Activated T-helper 2 cell treated with anti-CD3 and anti-CD28 coated beads, Interferon-gamma antibody, Interleukin-2, Interleukin-4, amounts not matched to agents 10 μg/mL and 5 μg/mL and 100 μg/mL, durations not matched to agents 14 hours and 24 hours and 36 hours (primary cell): ENCODE measurements at regions of chr17 and their contacts with region 1.

Region 1: DNA sequence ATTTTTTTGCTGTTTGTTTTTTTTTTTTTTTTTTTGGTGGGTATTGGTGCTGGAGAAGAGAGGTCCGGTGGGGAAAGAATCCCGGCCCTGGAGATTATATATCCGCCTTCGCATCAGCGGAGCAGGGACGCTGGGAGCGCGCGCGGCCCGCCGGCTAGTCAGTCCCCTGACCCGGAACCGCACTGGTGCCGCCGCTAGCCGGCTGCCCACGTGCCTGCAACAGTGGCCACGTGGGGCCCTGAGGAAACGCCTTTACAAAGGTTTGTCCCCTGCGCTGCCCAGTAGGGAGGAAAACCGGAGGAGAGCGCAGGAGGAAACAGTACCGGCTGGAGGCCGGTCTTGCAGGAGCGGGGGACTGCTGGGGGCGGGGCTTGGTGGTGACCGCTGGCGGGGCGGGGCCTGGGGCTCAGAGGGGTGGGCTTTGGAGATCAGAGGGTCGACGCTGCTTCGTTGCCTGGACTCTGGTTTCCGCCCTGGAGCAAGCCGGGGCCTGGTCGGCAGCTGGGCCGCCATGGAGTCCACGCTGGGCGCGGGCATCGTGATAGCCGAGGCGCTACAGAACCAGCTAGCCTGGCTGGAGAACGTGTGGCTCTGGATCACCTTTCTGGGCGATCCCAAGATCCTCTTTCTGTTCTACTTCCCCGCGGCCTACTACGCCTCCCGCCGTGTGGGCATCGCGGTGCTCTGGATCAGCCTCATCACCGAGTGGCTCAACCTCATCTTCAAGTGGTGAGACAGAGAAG is at the start of gene G6PC3:
- DNase-seq: peak; percentile 77
- H3K4me3 Mint-ChIP-seq: peak within 1 kb of the TSS; percentile 92
- H3K27ac Mint-ChIP-seq: peak within 1 kb of the TSS; percentile 92
- H3K4me1 Mint-ChIP-seq: peaks cover 20% of the 10 kb centered on the region
- H3K27me3 Mint-ChIP-seq: no peaks in the 10 kb centered on the region
- total RNA-seq, gene G6PC3: 36.3 and 39.2 TPM in 2 replicates

Region 2: DNA sequence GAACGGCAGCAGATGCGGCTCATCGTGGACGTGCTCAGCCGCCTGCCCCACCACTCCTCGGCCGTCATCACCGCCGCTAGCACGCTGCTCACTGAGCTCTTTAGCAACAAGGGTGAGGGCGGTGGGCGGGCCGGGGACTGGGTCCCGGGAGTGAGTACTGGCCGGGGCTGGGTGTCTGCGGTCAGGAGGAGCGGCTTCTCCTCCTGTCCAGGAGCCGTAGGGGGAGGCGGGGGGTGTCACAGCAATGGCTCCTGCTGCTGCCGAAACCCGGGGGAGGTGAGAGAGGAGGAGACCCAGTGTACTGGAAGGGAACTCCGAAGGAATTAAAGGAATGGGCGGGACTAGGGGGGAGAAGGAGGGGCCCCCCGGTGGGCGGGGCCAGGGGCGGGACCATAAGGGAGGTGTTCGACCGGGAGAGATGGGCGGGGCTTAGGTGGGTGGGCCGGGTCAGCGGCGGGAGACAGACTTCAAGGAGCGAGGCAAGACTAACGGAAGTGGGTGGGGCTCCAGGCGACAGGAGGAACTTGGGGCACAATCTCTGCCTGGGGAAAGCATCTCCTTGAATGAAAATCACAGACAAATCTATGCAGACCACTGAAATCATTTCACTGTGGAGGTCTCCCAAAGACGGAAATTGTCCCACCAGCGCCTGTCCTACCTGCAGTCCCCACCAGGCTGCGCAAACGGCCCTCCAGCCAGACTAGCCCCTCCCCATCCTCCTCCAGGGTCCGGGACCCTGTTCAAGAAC is 63.9 kb before region 1 on chr17:
- intact Hi-C with region 1: loop called (anchors 2 kb)
- DNase-seq: peak; percentile 87
- H3K4me3 Mint-ChIP-seq: peak overlapping the region; percentile 81
- H3K27ac Mint-ChIP-seq: peak overlapping the region; percentile 33
- H3K4me1 Mint-ChIP-seq: peaks cover 13% of the 10 kb centered on the region
- H3K27me3 Mint-ChIP-seq: peaks cover 21% of the 10 kb centered on the region

Region 3: DNA sequence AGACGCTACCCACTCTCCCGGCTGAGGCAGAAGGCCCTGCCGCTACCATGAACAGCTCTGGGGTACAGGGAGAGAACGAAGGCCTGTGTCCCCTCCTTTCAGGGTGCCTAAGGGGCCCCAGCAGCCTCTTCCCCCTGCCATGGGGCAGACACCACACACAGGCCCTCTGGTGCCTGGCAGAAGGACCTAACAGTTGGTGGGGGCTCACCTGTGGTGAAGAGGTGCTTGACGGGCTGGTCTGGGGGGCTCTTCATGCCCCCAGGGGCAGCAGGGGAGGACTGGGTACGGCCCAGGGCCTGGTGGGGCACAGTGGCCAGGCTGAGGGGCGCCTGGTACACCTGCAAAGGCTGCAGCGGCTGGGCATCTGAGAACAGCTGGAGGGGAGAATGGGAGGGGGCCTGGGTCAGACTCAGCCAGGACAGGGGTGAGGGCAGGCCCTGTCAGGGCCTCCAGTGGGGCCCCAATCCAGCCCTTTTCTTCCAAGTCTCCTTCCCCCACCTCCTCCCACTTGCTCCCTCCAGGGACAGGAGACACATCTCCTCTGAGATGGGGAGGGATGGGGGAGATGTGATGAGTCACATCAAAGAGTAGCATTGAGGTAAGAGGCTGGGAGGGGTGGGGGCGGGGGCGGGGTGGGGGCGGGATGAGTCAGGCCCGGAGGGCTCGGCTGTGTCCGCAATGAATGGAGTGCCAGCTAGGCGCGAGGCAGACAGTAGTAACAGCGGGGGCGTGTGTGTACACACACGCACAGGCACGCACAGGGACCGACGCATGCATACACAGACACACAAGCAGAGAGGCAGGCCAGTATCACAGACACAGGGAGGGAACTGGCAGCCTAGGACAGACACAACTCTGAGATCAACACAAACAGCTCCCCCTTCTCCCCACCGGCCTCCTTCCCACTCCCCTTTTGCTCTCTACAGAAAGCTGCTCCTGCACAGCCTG is 16.0 kb after region 1 on chr17:
- intact Hi-C with region 1: loop called (anchors 2 kb)
- DNase-seq: peak; percentile 23
- H3K4me3 Mint-ChIP-seq: peak overlapping the region; percentile 35
- H3K27ac Mint-ChIP-seq: peak overlapping the region; percentile 69
- H3K4me1 Mint-ChIP-seq: peaks cover 13% of the 10 kb centered on the region
- H3K27me3 Mint-ChIP-seq: no peaks in the 10 kb centered on the region

Region 4: GRCh38 chr17:44123356-44124117 is 52.9 kb after region 1 on chr17 and contains the start of gene HDAC5:
- intact Hi-C with region 1: loop called (anchors 5 kb)
- DNase-seq: peak; percentile 93
- H3K4me3 Mint-ChIP-seq: peak within 1 kb of the TSS; percentile 90
- H3K27ac Mint-ChIP-seq: peak within 1 kb of the TSS; percentile 95
- H3K4me1 Mint-ChIP-seq: peaks cover 17% of the 10 kb centered on the region
- H3K27me3 Mint-ChIP-seq: peaks cover 9% of the 10 kb centered on the region
- total RNA-seq, gene HDAC5: 18.7 and 19.9 TPM in 2 replicates

Region 5: GRCh38 chr17:44141717-44142285 is 71.2 kb after region 1 on chr17 and contains the start of gene HROB:
- intact Hi-C with region 1: loop called (anchors 5 kb)
- DNase-seq: peak; percentile 97
- H3K4me3 Mint-ChIP-seq: peak within 1 kb of the TSS; percentile 91
- H3K27ac Mint-ChIP-seq: peak within 1 kb of the TSS; percentile 94
- H3K4me1 Mint-ChIP-seq: peaks cover 15% of the 10 kb centered on the region
- H3K27me3 Mint-ChIP-seq: no peaks in the 10 kb centered on the region
- total RNA-seq, gene HROB: 20.7 and 24.1 TPM in 2 replicates

Region 6: DNA sequence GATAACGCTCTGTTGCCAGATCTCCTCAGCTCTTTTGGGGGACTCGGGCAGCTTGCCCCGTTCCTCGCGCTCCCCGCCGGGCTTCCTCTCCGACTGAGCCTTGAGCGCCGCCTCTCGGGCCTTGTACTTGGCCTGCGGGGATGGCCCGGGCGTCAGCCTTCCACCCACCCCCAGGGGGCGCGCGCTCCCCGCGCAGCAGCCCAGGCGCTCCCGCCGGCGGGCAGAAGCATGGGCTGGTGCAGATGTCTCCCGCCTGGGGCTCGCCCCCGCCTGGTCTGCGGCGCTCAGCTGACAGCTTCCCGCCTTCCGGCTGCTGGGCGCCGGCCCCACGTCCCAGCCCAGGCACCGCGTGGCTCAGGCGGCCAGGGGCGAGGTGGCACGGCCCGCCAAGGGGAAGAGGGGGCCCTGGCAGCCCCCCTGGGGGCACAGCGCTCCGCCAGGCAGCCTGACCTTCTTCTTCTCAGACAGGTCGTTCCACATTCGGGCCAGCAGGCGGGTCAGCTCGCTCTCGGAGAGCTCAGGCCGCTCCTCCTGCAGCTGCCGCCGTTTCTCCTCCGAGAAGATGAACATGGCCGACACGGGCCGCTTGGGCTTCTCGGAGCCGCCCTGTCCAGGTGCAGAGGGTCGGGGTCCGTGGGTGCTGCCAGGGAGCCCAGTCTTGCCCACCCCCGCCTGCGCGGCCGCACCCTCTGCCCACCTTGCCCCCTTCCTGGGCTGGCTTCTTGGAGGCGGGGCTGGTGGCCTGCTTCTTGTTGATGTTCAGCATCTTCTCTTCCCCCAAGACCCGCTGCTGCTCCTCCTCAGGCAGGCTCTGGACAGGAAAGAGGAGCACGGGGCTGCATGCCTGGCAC is 139.9 kb after region 1 on chr17:
- intact Hi-C with region 1: no loop called
- DNase-seq: peak; percentile 91
- H3K4me3 Mint-ChIP-seq: peak overlapping the region; percentile 75
- H3K27ac Mint-ChIP-seq: peak overlapping the region; percentile 88
- H3K4me1 Mint-ChIP-seq: peaks cover 23% of the 10 kb centered on the region
- H3K27me3 Mint-ChIP-seq: no peaks in the 10 kb centered on the region